B cell (primary cell): ENCODE measurements at regions of chr14 and their contacts with region 1.

Region 1: GRCh38 chr14:90985601-90986242 is 74.7 kb downstream of the RPS6KA5 start:
- DNase-seq: peak; percentile 45
- ATAC-seq: peak; percentile 31
- H3K4me3 ChIP-seq: no peak overlapping the region
- H3K4me3 Mint-ChIP-seq: no peak overlapping the region
- H3K27ac ChIP-seq: no peak overlapping the region
- H3K27ac Mint-ChIP-seq: no peak overlapping the region
- H3K4me1 ChIP-seq: peaks cover 13% of the 10 kb centered on the region in 2 donors
- H3K4me1 Mint-ChIP-seq: peaks cover 17% of the 10 kb centered on the region
- H3K27me3 ChIP-seq: no peaks in the 10 kb centered on the region
- H3K27me3 Mint-ChIP-seq: no peaks in the 10 kb centered on the region
- CTCF ChIP-seq: peak; percentile 4

Region 2: GRCh38 chr14:90903101-90903500 is 82.6 kb before region 1 on chr14:
- CTCF ChIA-PET with region 1: interaction called, 8 read pairs
- POLR2A ChIA-PET with region 1: no interaction called
- intact Hi-C with region 1: loop called (anchors 2 kb)
- DNase-seq: peak; percentile 68
- ATAC-seq: peak; percentile 69
- H3K4me3 ChIP-seq: no peak overlapping the region
- H3K4me3 Mint-ChIP-seq: no peak overlapping the region
- H3K27ac ChIP-seq: no peak overlapping the region
- H3K27ac Mint-ChIP-seq: peak overlapping the region; percentile 46
- H3K4me1 ChIP-seq: peaks cover 5 to 8% of the 10 kb centered on the region in 2 donors
- H3K4me1 Mint-ChIP-seq: peaks cover 15% of the 10 kb centered on the region
- H3K27me3 ChIP-seq: no peaks in the 10 kb centered on the region
- H3K27me3 Mint-ChIP-seq: no peaks in the 10 kb centered on the region
- CTCF ChIP-seq: peak; percentile 87

Region 3: GRCh38 chr14:90970167-90970600 is 15.5 kb before region 1 on chr14:
- CTCF ChIA-PET with region 1: no interaction called
- POLR2A ChIA-PET with region 1: no interaction called
- intact Hi-C with region 1: no loop called
- DNase-seq: no peak
- ATAC-seq: no peak
- H3K4me3 ChIP-seq: no peak overlapping the region
- H3K4me3 Mint-ChIP-seq: no peak overlapping the region
- H3K27ac ChIP-seq: no peak overlapping the region
- H3K27ac Mint-ChIP-seq: no peak overlapping the region
- H3K4me1 ChIP-seq: peaks cover 0 to 4% of the 10 kb centered on the region in 2 donors
- H3K4me1 Mint-ChIP-seq: peaks cover 6% of the 10 kb centered on the region
- H3K27me3 ChIP-seq: no peaks in the 10 kb centered on the region
- H3K27me3 Mint-ChIP-seq: no peaks in the 10 kb centered on the region
- CTCF ChIP-seq: no peak

Region 4: GRCh38 chr14:90995785-90996184 is 10.1 kb after region 1 on chr14:
- CTCF ChIA-PET with region 1: interaction called, 13 read pairs
- POLR2A ChIA-PET with region 1: no interaction called
- intact Hi-C with region 1: no loop called
- DNase-seq: peak; percentile 31
- ATAC-seq: no peak
- H3K4me3 ChIP-seq: no peak overlapping the region
- H3K4me3 Mint-ChIP-seq: peak overlapping the region; percentile 62
- H3K27ac ChIP-seq: peak overlapping the region in 1 of 2 donors; percentile 66
- H3K27ac Mint-ChIP-seq: peak overlapping the region; percentile 80
- H3K4me1 ChIP-seq: peaks cover 21 to 26% of the 10 kb centered on the region in 2 donors
- H3K4me1 Mint-ChIP-seq: peaks cover 44% of the 10 kb centered on the region
- H3K27me3 ChIP-seq: no peaks in the 10 kb centered on the region
- H3K27me3 Mint-ChIP-seq: no peaks in the 10 kb centered on the region
- CTCF ChIP-seq: no peak

Region 5: GRCh38 chr14:91021991-91022621 is 36.4 kb after region 1 on chr14:
- CTCF ChIA-PET with region 1: no interaction called
- POLR2A ChIA-PET with region 1: no interaction called
- intact Hi-C with region 1: loop called (anchors 5 kb)
- DNase-seq: no peak
- ATAC-seq: peak; percentile 61
- H3K4me3 ChIP-seq: peak overlapping the region; percentile 9 to 70 (median 41)
- H3K4me3 Mint-ChIP-seq: peak overlapping the region; percentile 92
- H3K27ac ChIP-seq: peak overlapping the region; percentile 59 to 89
- H3K27ac Mint-ChIP-seq: peak overlapping the region; percentile 99
- H3K4me1 ChIP-seq: peaks cover 34 to 39% of the 10 kb centered on the region in 2 donors
- H3K4me1 Mint-ChIP-seq: peaks cover 67% of the 10 kb centered on the region
- H3K27me3 ChIP-seq: no peaks in the 10 kb centered on the region
- H3K27me3 Mint-ChIP-seq: no peaks in the 10 kb centered on the region
- CTCF ChIP-seq: no peak